CD4-positive, alpha-beta T cell (primary cell): ENCODE measurements at regions of chr2 and their contacts with region 1.

Region 1: GRCh38 chr2:172427256-172427989 is at the start of gene ITGA6:
- DNase-seq: peak; percentile 65 to 91 (median 72)
- ATAC-seq: peak; percentile 73
- H3K4me3 ChIP-seq: peak within 1 kb of the TSS; percentile 78
- H3K4me3 Mint-ChIP-seq: peak within 1 kb of the TSS; percentile 93
- H3K27ac ChIP-seq: peak within 1 kb of the TSS; percentile 13 to 74
- H3K27ac Mint-ChIP-seq: peak within 1 kb of the TSS; percentile 89
- H3K4me1 ChIP-seq: peaks cover 51% of the 10 kb centered on the region
- H3K4me1 Mint-ChIP-seq: peaks cover 45% of the 10 kb centered on the region
- H3K27me3 ChIP-seq: no peaks in the 10 kb centered on the region
- H3K27me3 Mint-ChIP-seq: no peaks in the 10 kb centered on the region
- CTCF ChIP-seq: no peak
- total RNA-seq, gene ITGA6: 53.5 to 58.0 TPM

Region 2: DNA sequence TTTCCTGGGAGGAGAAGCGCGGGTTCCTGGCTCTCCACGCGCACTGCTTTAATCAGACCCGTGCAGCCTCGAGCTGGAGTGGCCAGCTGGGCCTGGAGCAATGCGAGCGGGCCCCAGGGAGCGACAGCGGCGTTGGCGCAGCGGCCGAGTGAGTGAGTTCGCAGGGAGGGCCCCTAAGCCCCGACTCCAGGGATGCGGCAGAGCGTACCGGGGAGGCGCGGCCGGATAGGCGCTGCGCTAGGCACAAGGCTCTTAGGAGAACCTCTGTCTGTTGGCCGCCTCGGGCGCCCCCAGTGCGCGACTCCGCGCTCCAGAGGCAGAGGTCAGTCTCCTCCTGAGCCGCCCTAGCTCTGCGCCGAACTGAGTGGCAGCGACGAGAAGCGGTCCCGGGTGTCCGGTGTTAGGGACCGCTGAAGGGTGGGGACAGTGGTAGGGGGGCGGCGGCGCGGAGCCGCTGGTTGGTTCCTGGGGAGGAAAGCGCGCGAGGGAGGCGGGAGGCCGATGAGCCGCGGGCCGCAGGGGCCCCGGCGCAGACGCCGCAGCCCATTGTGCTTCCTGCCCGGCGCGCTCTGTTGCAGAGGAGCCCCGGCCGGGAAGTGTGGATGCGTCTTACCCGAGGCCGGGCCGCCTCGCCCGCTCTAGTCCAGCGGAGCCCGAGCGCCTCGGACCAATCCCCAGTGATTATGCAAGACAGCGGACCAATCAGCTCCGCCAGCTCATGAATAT is 342.5 kb before region 1 on chr2:
- CTCF ChIA-PET with region 1: no interaction called
- POLR2A ChIA-PET with region 1: no interaction called
- intact Hi-C with region 1: no loop called
- DNase-seq: peak in 5 of 14 experiments; percentile 43 to 77 (median 48)
- ATAC-seq: peak; percentile 40
- H3K4me3 ChIP-seq: peak overlapping the region; percentile 41
- H3K4me3 Mint-ChIP-seq: peak overlapping the region; percentile 70
- H3K27ac ChIP-seq: no peak overlapping the region
- H3K27ac Mint-ChIP-seq: peak overlapping the region; percentile 78
- H3K4me1 ChIP-seq: peaks cover 75% of the 10 kb centered on the region
- H3K4me1 Mint-ChIP-seq: peaks cover 80% of the 10 kb centered on the region
- H3K27me3 ChIP-seq: peaks cover 100% of the 10 kb centered on the region in 2 experiments
- H3K27me3 Mint-ChIP-seq: peaks cover 100% of the 10 kb centered on the region
- CTCF ChIP-seq: no peak

Region 3: DNA sequence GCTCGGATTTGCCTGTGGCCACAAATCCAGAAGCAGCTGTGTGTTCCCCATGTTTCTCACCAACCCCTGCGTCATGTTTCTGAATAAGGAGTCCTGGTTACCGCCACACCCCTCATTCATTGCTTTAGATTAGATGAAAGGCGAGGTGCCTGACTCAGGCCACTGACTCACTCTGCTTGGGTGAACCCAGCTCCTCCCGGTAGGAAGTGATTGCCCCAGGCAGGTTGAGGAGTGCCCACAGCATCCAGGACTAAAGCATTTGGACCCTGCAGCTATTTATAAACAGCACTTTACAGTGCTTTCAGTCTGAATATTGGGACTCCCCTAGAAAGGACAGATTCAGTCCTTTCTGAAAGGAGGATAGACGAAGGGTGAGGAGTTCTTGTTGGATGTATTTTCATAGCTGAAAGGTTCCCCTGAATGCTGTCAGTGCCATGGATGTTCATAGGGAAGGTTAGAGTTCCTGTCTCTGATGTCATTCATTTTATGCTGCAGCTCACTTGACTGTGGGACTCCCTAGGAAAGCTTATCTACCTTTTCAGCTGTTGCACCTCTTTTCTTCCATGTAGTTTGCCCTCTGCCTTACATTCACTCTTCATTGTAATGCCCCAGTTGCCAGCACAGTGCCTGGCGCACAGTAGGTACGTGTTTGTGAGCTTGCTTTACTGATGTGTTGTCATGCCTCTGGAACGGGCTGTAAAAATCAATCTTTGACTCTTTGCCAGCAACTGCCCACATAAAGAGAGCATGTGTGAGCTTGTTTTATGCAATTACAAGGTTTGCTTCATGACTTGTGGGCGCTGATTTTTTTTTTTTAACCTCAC is 14.9 kb after region 1 on chr2:
- CTCF ChIA-PET with region 1: interaction called, 64 read pairs
- POLR2A ChIA-PET with region 1: interaction called, 104 read pairs
- intact Hi-C with region 1: loop called in 1 of 2 experiments (anchors 2 kb)
- DNase-seq: peak in 12 of 14 experiments; percentile 28 to 74 (median 46)
- ATAC-seq: peak; percentile 53
- H3K4me3 ChIP-seq: peak overlapping the region; percentile 31
- H3K4me3 Mint-ChIP-seq: peak overlapping the region; percentile 92
- H3K27ac ChIP-seq: no peak overlapping the region
- H3K27ac Mint-ChIP-seq: peak overlapping the region; percentile 89
- H3K4me1 ChIP-seq: peaks cover 66% of the 10 kb centered on the region
- H3K4me1 Mint-ChIP-seq: peaks cover 76% of the 10 kb centered on the region
- H3K27me3 ChIP-seq: no peaks in the 10 kb centered on the region
- H3K27me3 Mint-ChIP-seq: no peaks in the 10 kb centered on the region
- CTCF ChIP-seq: no peak

Region 4: GRCh38 chr2:172452845-172453244 is 25.4 kb after region 1 on chr2:
- CTCF ChIA-PET with region 1: interaction called, 282 read pairs
- POLR2A ChIA-PET with region 1: interaction called, 15 read pairs
- intact Hi-C with region 1: no loop called
- DNase-seq: no peak
- ATAC-seq: no peak
- H3K4me3 ChIP-seq: no peak overlapping the region
- H3K4me3 Mint-ChIP-seq: peak overlapping the region; percentile 36
- H3K27ac ChIP-seq: no peak overlapping the region
- H3K27ac Mint-ChIP-seq: peak overlapping the region; percentile 19
- H3K4me1 ChIP-seq: peaks cover 67% of the 10 kb centered on the region
- H3K4me1 Mint-ChIP-seq: peaks cover 86% of the 10 kb centered on the region
- H3K27me3 ChIP-seq: no peaks in the 10 kb centered on the region
- H3K27me3 Mint-ChIP-seq: no peaks in the 10 kb centered on the region
- CTCF ChIP-seq: no peak

Region 5: DNA sequence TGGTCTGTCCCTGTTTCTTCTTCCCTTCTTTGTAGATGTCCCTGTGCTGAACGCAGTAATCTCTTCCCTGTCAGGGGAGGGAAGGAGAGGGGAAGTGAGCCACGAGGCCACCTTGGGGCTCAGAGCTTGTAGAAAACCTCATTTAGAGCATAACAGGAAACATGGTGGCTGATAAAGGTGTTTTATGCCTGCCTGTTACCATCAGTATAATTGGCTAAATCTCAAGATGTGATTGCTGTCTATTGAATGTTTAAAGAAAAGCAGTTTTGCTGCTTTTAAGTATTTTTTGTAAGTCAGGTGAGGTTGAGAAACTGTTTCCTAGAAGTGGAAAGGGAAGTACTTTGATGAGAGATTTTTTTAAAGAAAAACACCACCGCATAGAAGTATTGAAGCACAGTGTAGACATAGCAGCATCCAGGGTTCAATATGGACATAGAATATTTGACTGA is 68.8 kb after region 1 on chr2:
- CTCF ChIA-PET with region 1: no interaction called
- POLR2A ChIA-PET with region 1: interaction called, 21 read pairs
- intact Hi-C with region 1: no loop called
- DNase-seq: peak; percentile 17 to 81 (median 51)
- ATAC-seq: peak; percentile 96
- H3K4me3 ChIP-seq: no peak overlapping the region
- H3K4me3 Mint-ChIP-seq: peak overlapping the region; percentile 83
- H3K27ac ChIP-seq: peak overlapping the region; percentile 63 to 73
- H3K27ac Mint-ChIP-seq: peak overlapping the region; percentile 95
- H3K4me1 ChIP-seq: peaks cover 49% of the 10 kb centered on the region
- H3K4me1 Mint-ChIP-seq: peaks cover 81% of the 10 kb centered on the region
- H3K27me3 ChIP-seq: no peaks in the 10 kb centered on the region
- H3K27me3 Mint-ChIP-seq: no peaks in the 10 kb centered on the region
- CTCF ChIP-seq: no peak